ENCODE measurements at regions of chr1 and their contacts with region 1.

Region 1: DNA sequence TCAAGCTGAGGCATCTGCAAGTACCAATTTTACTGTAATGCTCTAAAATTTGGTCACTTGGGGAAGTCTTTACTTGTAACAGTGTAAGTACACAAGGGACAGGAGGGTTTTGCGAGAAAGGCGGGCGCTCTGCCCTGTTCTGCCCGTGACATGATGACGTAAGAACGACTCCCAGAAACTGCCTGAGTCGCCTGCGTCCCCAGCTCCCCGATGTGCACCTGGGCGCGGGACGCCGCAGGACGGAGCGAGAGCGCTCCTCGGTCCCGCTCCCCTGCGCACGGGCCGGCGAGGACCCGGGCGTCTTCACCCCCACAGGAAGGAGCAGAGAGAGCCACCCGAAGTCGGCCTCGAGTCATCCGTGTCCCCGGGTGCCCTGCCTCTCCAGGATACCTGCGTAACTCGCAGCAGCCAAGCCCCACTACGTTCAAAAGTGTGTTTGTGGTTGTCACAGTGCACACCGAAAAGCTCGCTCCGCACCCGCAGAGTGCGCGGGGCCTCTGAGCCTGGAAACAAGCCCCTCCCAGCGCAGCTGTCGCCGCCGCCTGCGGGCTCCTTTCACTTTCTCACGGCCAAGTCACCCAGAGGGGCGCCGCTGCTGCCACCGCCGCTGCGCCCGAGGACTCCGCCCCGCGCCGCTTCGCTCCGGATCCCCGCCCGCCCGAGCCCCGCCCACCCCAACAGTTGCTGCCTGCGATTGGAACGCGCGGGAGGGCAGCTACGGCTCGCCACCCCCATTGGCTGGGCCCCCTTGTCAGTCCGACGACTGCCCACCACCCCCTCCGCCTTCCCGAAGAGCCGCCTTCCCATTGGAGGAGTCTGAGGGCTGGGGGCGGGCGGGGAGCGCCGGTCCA is 3.2 kb upstream of the ZBTB18 start:
- DNase-seq: peak in 1 of 2 donors; percentile 100
- H3K4me3 ChIP-seq: peak overlapping the region; percentile 91 to 99
- H3K27ac ChIP-seq: peak overlapping the region; percentile 99
- H3K4me1 ChIP-seq: peaks cover 31% of the 10 kb centered on the region
- H3K27me3 ChIP-seq: no peaks in the 10 kb centered on the region
- CTCF ChIP-seq: no peak
- POLR2A ChIP-seq: peak; percentile 55 to 90

Region 2: DNA sequence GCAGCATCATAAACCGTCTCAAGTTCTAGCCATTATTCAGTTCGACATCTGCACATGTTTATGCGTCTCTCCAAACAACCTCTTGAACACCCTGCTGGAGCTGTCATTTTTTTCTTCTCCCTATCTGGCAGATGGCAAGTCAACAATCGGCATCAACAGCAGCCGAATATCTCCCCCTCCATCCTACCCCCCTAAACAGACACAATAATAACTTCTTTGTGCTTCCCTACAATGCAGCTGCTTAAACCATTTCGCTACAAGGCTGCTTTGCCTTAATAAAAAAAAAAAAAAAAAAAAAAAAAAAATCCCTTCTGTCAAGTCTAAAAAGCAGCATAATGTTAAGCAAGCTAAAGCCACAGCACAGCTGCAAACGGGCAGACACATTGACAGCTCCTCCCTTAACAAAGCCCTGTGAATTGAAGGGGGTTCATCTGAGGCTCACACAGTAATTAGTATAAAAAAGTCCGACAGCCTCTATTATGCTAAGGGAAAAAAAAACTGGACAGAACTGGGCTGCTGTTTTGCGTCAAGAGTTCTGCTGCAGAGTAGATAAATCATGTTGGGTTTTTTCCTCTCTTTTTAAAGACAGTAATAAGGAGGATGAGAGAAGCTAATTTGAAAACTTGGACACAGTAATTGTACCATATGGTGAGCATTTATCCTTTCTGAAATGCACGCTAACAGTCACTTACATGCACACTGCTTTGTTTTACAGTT is 334.2 kb before region 1 on chr1:
- intact Hi-C with region 1: no loop called
- DNase-seq: no peak
- H3K4me3 ChIP-seq: peak overlapping the region in 1 of 2 donors; percentile 12
- H3K27ac ChIP-seq: peak overlapping the region; percentile 32
- H3K4me1 ChIP-seq: peaks cover 37% of the 10 kb centered on the region
- H3K27me3 ChIP-seq: no peaks in the 10 kb centered on the region
- CTCF ChIP-seq: no peak
- POLR2A ChIP-seq: no peak

Region 3: GRCh38 chr1:244065960-244066388 is 18.1 kb after region 1 on chr1:
- intact Hi-C with region 1: no loop called
- DNase-seq: no peak
- H3K4me3 ChIP-seq: no peak overlapping the region
- H3K27ac ChIP-seq: no peak overlapping the region
- H3K4me1 ChIP-seq: no peaks in the 10 kb centered on the region
- H3K27me3 ChIP-seq: no peaks in the 10 kb centered on the region
- CTCF ChIP-seq: no peak
- POLR2A ChIP-seq: no peak

Region 4: GRCh38 chr1:244077473-244078220 is 29.8 kb after region 1 on chr1:
- intact Hi-C with region 1: no loop called
- DNase-seq: peak in 1 of 2 donors; percentile 74
- H3K4me3 ChIP-seq: no peak overlapping the region
- H3K27ac ChIP-seq: no peak overlapping the region
- H3K4me1 ChIP-seq: peaks cover 6% of the 10 kb centered on the region
- H3K27me3 ChIP-seq: no peaks in the 10 kb centered on the region
- CTCF ChIP-seq: no peak
- POLR2A ChIP-seq: no peak

Region 5: DNA sequence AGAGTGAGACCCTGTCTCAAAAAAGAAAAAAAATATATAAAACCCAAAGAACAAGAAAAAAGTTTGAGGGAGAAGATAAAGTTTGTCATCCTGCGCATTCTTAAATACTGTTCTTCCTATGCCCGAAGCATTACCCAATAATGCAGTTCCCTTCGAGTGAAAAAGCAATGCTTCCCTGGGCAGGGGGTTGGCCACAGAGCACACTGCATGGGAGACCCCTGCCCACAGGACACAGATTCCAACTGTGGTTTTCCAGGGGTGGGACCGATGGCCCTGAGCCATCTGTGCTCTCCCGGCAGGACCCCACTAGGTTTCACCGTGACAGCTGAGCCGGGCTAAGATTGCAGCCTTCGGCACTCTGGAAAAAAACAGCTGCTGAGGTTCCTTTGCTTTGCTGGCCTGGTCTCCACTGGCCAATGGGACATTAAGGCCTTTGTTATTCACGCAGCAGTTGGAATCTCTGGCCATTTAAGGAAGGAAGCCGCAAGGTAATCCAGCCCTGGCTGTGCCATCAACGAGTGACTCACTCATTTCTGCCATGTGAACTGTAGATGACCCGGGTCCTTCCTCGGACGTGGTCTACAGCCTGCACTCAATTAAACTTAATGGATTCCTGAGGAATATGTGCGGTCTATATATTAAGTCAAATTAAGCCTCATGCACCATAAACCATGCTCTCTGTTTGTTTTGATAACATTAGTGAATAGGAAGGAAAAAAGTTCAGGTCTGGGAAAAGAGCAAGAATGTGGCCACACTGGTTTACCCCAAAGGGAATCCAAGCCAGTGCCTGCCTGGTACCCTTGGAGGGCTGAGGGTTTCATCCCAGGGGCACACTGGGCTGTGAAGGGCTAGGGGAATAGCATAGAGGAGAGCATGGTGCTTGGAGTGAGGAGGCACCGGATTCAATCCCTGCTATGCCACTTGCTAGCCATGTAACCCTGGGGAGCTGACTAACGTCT is 166.4 kb after region 1 on chr1:
- intact Hi-C with region 1: loop called (anchors 5 kb)
- DNase-seq: peak in 1 of 2 donors; percentile 58
- H3K4me3 ChIP-seq: no peak overlapping the region
- H3K27ac ChIP-seq: peak overlapping the region; percentile 5
- H3K4me1 ChIP-seq: peaks cover 32% of the 10 kb centered on the region
- H3K27me3 ChIP-seq: no peaks in the 10 kb centered on the region
- CTCF ChIP-seq: no peak
- POLR2A ChIP-seq: no peak

Region 6: DNA sequence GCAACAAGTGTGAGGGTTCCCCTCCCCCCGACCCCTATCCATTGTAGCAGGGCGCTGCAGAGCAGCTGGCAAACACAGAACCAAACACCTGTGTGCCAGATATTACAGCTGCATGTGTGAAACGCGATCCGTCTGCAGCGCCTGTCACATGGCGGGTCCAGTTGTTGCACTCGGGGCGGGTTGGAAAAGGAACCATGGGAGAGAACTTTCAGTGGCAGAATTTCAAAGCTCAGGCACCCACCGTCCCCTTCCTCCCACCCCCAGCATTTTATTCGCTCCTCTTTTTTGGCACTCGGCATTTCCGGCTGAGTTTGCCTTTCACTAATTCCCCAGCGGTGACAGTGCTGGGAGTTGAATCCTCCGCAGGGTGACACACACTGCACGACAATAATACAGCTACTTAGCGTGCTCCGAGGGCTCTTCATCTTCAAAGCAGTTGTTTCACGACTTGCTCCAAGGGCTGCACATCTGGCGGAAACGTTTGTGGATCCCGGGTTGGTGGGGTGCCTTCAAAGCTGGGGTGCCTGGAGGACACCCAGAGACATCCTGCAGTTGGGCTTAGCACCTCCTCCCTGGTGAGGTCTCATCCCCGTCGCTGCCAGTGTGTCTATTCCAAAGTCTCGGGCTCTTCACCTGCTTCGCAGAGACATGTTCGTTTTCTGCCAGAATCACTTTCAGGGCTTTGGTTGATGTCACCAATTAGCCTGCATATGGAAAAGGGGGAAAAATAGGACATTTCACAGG is 183.9 kb after region 1 on chr1:
- intact Hi-C with region 1: no loop called
- DNase-seq: no peak
- H3K4me3 ChIP-seq: peak overlapping the region in 1 of 2 donors; percentile 28
- H3K27ac ChIP-seq: no peak overlapping the region
- H3K4me1 ChIP-seq: peaks cover 11% of the 10 kb centered on the region
- H3K27me3 ChIP-seq: no peaks in the 10 kb centered on the region
- CTCF ChIP-seq: no peak
- POLR2A ChIP-seq: no peak

Region 7: DNA sequence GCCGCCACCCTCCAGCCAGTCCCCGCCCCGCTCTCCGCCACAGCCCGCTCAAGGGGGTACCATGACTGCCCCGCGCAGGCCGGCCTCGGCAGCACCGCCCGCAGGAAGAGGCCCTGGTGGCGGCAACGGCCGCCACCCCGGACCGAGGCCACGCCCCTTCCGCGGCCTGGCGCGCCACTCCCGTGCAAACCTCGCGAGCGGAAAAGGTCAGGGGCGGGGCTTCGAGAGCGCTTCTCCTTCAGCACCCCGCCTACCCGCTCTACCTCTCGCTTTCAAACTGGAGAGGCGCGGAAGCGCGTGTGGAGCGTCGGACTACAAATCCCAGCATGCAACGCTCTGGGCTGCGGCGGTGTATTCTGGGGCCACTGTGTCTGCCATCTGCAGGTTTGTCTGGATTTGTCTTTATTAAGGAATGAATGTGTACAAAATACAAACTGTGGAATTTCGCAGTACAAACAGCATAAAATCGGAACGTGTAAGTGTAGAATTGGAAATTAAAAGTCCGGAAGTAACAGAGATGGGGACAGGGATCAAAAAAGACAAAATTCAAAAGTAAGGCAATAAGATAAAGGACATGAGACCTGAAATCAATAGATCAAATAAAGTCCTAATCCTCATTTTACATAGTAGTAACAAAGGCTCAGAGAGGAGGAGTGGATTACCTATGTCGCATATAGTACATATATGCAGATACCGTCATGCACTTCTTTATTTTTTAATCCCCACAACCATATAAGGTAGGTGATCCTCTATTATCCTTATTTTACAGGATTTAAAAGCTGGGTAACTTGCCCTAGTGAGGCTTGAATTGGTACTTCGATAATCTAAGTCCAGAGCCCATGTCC is 404.3 kb after region 1 on chr1:
- intact Hi-C with region 1: loop called (anchors 5 kb)
- DNase-seq: peak; percentile 98 to 99
- H3K4me3 ChIP-seq: peak overlapping the region; percentile 79 to 99
- H3K27ac ChIP-seq: peak overlapping the region; percentile 94
- H3K4me1 ChIP-seq: peaks cover 32% of the 10 kb centered on the region
- H3K27me3 ChIP-seq: no peaks in the 10 kb centered on the region
- CTCF ChIP-seq: peak; percentile 4 to 60 (median 19)
- POLR2A ChIP-seq: no peak

Region 8: DNA sequence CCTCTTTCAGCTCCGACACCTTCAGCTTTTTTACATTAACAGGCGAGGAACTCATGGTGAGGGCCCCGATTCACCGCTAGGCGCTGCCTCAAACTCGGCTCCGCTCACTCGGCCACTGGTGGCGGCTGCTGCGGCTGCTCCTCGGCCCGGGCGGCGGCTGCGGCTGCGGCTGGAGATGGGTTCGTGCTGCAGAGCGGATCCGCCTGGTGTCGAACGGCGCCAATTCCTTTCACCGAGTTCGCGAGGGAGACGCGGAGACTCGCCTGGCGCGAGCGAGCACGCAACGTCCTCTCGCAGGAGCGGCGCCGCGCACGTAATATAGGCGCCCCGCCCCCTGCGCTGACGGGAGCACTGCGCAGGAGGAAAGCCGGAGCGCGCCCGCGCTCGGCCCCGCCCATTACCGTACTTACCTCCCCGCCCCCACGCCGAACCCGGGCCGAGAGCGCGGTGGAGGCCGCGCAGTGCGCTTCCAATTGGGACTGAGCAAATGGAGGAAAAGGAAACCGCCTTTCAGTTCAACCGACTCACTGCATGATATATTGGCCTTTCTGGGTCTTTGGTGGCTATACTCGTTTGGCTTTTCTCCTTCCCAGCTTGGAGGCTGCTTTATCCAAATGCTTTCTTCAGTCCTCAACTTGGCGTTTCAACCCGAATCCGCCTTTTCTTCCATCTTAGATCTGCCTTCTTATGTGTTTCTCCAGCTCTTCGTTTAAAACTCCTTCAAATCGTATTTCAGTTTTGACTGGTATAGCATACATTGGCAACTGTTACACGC is 816.6 kb after region 1 on chr1 and contains the start of gene HNRNPU:
- intact Hi-C with region 1: loop called (anchors 10 kb)
- DNase-seq: peak in 1 of 2 donors; percentile 97
- H3K4me3 ChIP-seq: peak within 1 kb of the TSS; percentile 97 to 100
- H3K27ac ChIP-seq: peak within 1 kb of the TSS; percentile 100
- H3K4me1 ChIP-seq: peaks cover 31% of the 10 kb centered on the region
- H3K27me3 ChIP-seq: no peaks in the 10 kb centered on the region
- CTCF ChIP-seq: peak in 1 of 3 experiments; percentile 44
- POLR2A ChIP-seq: peak; percentile 81 to 99
- total RNA-seq, gene HNRNPU: 293 TPM